K562 (cell line): ENCODE measurements at regions of chrX and their contacts with region 1.

Region 1: GRCh38 chrX:144334577-144334976 is 450.7 kb downstream of the UBE2NL start:
- DNase-seq: peak in 3 of 4 experiments; percentile 1 to 9 (median 5)
- ATAC-seq: no peak
- H3K4me3 ChIP-seq: no peak overlapping the region
- H3K27ac ChIP-seq: no peak overlapping the region
- H3K4me1 ChIP-seq: no peaks in the 10 kb centered on the region
- H3K27me3 ChIP-seq: no peaks in the 10 kb centered on the region
- CTCF ChIP-seq: peak in 1 of 3 experiments; percentile 27; a peak in 1 of 6 replicates
- EP300 ChIP-seq: no peak
- POLR2A ChIP-seq: no peak
- RAD21 ChIP-seq: no peak

Region 2: DNA sequence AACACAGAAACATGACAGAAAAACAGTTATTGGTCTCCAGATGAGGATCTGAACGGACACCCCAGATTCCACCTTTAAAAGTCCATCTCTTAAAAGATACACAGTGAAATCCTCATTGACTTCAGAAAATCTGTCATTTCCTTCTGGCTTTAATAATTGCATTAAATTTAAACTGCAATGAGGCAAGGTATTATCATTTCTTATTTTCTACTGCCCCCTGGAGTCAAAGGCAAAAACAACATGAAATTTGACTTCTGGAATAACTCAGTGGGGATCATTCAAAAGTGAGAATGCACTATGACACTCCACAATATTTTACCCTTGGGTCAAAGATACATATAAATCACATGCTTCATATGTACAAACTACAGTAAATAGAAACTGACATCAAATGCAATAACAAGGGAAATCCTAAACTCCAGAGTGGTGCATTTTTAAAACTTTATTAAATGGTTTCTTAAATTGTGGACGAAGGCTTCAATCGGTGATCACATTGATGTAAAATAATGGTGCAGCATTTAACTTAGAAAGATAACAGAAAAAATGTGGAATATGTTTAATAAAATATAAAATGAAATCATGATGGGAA is 856.3 kb after region 1 on chrX:
- CTCF ChIA-PET with region 1: no interaction called
- POLR2A ChIA-PET with region 1: no interaction called
- in situ Hi-C with region 1: no loop called
- intact Hi-C with region 1: loop called (anchors 10 kb)
- DNase-seq: peak in 2 of 4 experiments; percentile 1 to 5
- ATAC-seq: no peak
- H3K4me3 ChIP-seq: no peak overlapping the region
- H3K27ac ChIP-seq: no peak overlapping the region
- H3K4me1 ChIP-seq: no peaks in the 10 kb centered on the region
- H3K27me3 ChIP-seq: no peaks in the 10 kb centered on the region
- CTCF ChIP-seq: peak in 2 of 3 experiments; percentile 21 to 37; a peak in 1 of 6 replicates
- EP300 ChIP-seq: no peak
- POLR2A ChIP-seq: no peak
- RAD21 ChIP-seq: peak; percentile 27 to 58; a peak in 3 of 4 replicates